AG04450 (cell line): ENCODE measurements at regions of chr22 and their contacts with region 1.

Region 1: DNA sequence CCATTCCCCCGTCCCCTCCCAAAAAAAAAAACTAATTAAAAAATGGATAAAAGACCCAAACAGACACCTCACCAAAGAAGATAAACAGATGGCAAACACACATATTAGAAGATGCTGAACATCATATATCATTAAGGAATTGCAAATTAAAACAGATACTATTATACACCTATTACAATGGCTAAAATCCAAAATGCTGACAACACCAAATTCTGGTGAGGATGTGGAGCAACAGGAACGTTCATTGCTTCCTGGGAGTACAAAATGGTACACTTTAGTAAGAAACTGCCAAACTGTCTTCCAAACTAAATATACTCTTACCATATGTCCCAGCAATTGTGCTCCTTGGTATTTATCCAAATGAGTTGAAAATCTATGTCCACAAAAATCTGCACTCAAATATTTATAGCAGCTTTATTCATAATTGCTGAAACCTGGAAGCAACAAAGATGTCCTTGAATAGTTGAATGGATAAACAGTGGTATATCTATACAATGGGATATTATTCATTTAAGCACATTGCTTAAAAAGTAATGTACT is 19.9 kb downstream of the NAGA start:
- DNase-seq: no peak
- H3K4me3 ChIP-seq: no peak overlapping the region
- H3K27ac ChIP-seq: no peak overlapping the region
- H3K27me3 ChIP-seq: no peaks in the 10 kb centered on the region
- CTCF ChIP-seq: no peak

Region 2: GRCh38 chr22:41557401-41558240 is 493.1 kb before region 1 on chr22:
- CTCF ChIA-PET with region 1: no interaction called
- POLR2A ChIA-PET with region 1: interaction called, 10 read pairs
- DNase-seq: peak; percentile 88
- H3K4me3 ChIP-seq: peak overlapping the region; percentile 17
- H3K27ac ChIP-seq: peak overlapping the region; percentile 93
- H3K27me3 ChIP-seq: no peaks in the 10 kb centered on the region
- CTCF ChIP-seq: no peak

Region 3: GRCh38 chr22:41966607-41967240 is 84.0 kb before region 1 on chr22:
- CTCF ChIA-PET with region 1: no interaction called
- POLR2A ChIA-PET with region 1: interaction called, 10 read pairs
- DNase-seq: peak; percentile 61
- H3K4me3 ChIP-seq: no peak overlapping the region
- H3K27ac ChIP-seq: no peak overlapping the region
- H3K27me3 ChIP-seq: peaks cover 11% of the 10 kb centered on the region
- CTCF ChIP-seq: peak; percentile 43